Sigmoid colon (tissue), 7 donors: ENCODE measurements at regions of chr21 and their contacts with region 1.

Region 1: GRCh38 chr21:32412162-32413014 is at the start of gene EVA1C:
- DNase-seq: peak; percentile 88
- H3K4me3 ChIP-seq: peak within 1 kb of the TSS; percentile 70 to 83 (median 80)
- H3K27ac ChIP-seq: peak within 1 kb of the TSS; percentile 95 to 98 (median 96)
- H3K4me1 ChIP-seq: peaks cover 0 to 40% (median 26%) of the 10 kb centered on the region in 4 donors
- H3K27me3 ChIP-seq: no peaks in the 10 kb centered on the region
- CTCF ChIP-seq: no peak
- EP300 ChIP-seq: peak in 1 of 4 donors; percentile 75
- POLR2A ChIP-seq: no peak
- total RNA-seq, gene EVA1C: 32.1 to 53.8 (median 41.2) TPM

Region 2: DNA sequence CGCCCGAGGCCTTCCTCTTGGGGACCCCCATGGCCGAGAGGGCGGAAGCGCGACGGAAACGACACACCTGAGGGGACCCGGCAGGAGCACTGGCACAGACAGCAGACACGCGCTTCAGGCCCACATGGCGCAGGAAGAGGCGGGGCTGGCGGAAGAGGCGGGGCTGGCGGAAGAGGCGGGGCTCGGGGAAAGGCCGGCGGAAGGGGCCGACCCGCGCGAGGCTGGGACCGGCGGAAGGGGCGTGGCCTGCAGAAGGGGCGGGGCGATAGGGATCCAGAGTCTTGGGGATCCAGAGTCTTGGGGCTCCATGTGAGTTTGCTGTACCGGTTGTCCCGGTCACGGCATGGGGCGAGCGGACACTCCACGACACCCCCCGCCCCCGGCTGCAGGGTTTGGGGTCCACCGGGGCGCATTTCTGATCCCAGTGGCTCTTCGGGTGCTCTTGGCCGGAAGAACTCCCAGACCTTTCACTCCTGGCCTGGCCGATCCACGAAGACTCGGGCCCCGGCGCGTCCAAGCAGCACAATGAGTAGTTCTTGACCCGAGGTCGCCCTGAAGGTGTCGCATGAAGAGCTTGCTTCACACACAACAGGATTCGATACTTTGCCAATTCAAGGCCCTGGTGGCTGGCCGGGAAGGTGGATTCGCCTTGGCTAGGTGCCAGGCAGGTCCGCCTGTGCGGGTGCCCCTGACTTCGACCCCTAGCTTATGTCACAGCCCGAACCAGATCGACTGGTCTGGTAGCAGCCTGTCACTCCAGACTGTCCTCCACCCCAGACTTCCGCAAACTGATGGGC is 19.3 kb before region 1 on chr21 and contains the start of gene URB1:
- intact Hi-C with region 1: loop called (anchors 1 kb)
- DNase-seq: peak; percentile 94
- H3K4me3 ChIP-seq: peak within 1 kb of the TSS; percentile 76 to 96 (median 86)
- H3K27ac ChIP-seq: peak within 1 kb of the TSS; percentile 84 to 87 (median 86)
- H3K4me1 ChIP-seq: peaks cover 0 to 37% (median 17%) of the 10 kb centered on the region in 4 donors
- H3K27me3 ChIP-seq: no peaks in the 10 kb centered on the region
- CTCF ChIP-seq: no peak
- EP300 ChIP-seq: no peak
- POLR2A ChIP-seq: peak; percentile 60 to 73
- total RNA-seq, gene URB1: 7.5 to 16.7 (median 11.5) TPM

Region 3: DNA sequence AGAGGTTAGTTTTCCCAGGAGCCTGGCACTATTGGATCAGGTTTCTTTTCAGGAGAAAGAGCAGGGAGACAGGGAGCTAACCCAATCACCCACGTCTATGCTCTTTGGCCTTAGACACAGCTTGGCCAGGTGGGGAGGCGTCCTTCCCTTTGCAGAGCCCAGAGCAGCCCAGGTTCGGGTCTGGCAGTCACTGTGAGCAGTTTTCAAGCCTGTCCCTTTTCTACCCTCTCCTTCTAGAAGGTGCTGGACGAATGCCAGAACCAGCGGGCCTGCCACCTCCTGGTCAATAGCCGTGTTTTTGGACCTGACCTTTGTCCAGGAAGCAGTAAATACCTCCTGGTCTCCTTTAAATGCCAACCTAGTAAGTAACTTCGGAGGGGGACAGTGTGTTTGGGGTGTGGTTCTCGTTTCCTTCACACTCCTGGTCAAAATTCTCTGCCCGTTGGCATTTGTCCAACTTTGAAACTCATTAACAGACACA is 45.0 kb after region 1 on chr21:
- intact Hi-C with region 1: loop called (anchors 5 kb)
- DNase-seq: no peak
- H3K4me3 ChIP-seq: no peak overlapping the region
- H3K27ac ChIP-seq: peak overlapping the region; percentile 69 to 84 (median 74)
- H3K4me1 ChIP-seq: peaks cover 0 to 27% (median 25%) of the 10 kb centered on the region in 4 donors
- H3K27me3 ChIP-seq: no peaks in the 10 kb centered on the region
- CTCF ChIP-seq: no peak
- EP300 ChIP-seq: no peak
- POLR2A ChIP-seq: no peak

Region 4: GRCh38 chr21:32516756-32517649 is 104.6 kb after region 1 on chr21:
- intact Hi-C with region 1: loop called (anchors 10 kb)
- DNase-seq: peak; percentile 67
- H3K4me3 ChIP-seq: no peak overlapping the region
- H3K27ac ChIP-seq: peak overlapping the region in 1 of 4 donors; percentile 65
- H3K4me1 ChIP-seq: peaks cover 0 to 17% (median 3%) of the 10 kb centered on the region in 4 donors
- H3K27me3 ChIP-seq: no peaks in the 10 kb centered on the region
- CTCF ChIP-seq: no peak
- EP300 ChIP-seq: no peak
- POLR2A ChIP-seq: no peak

Region 5: GRCh38 chr21:32569261-32570230 is 157.2 kb after region 1 on chr21:
- intact Hi-C with region 1: loop called (anchors 2 kb)
- DNase-seq: peak; percentile 89
- H3K4me3 ChIP-seq: peak overlapping the region; percentile 35 to 62 (median 56)
- H3K27ac ChIP-seq: peak overlapping the region; percentile 78 to 88 (median 83)
- H3K4me1 ChIP-seq: peaks cover 0 to 13% (median 10%) of the 10 kb centered on the region in 4 donors
- H3K27me3 ChIP-seq: no peaks in the 10 kb centered on the region
- CTCF ChIP-seq: peak; percentile 60 to 85 (median 76)
- EP300 ChIP-seq: no peak
- POLR2A ChIP-seq: no peak

Region 6: DNA sequence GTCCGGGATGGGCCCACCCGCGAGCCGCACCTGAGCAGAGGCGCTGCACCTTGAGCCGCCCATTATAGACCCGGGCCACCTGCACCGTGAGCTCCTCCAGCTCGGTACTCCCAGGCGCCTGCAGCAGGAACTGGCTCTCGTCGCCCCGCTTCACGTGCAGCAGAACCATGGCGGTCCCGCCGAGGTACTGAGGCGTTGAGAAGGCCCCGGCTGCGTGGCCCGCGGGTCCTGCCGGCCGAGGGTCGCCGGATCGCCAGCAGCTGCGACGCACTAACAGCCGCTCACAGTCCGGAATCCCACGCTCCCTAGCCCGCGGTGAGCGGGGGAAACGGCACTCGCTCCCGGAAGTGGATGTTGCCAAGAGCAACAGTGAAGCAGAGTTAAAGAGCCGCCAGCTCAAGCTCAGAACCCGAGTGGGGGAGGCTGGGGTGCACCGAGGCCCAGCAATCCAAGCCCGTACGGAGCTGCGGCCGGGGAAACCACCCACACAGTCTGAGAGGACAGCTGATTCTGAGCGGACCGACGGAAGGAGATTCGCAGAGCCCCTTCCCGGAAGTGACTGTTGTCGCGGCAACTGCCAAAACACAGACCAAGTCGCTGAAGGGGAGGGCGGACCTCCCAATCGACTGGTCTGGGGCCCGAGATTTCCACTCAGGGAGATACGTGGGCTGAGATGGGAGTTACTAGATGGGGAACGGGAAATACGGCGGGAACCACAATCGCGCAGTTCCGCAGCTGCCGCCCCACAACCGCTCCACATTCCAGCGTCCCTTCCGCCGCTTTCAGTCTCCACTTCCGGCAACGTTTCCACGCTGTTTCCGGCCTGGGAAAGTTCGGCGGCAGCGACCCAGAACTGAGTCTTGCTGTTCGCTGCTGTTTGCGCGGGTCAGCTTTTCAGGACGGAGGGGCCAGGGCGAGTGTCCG is 199.9 kb after region 1 on chr21 and contains the start of gene CFAP298:
- intact Hi-C with region 1: loop called (anchors 1 kb)
- DNase-seq: peak; percentile 91
- H3K4me3 ChIP-seq: peak within 1 kb of the TSS; percentile 61 to 96 (median 80)
- H3K27ac ChIP-seq: peak within 1 kb of the TSS; percentile 79 to 88 (median 86)
- H3K4me1 ChIP-seq: peaks cover 0 to 18% (median 14%) of the 10 kb centered on the region in 4 donors
- H3K27me3 ChIP-seq: no peaks in the 10 kb centered on the region
- CTCF ChIP-seq: no peak
- EP300 ChIP-seq: no peak
- POLR2A ChIP-seq: no peak
- total RNA-seq, gene CFAP298: 14.4 to 33.8 (median 24.2) TPM

Region 7: GRCh38 chr21:32770871-32771523 is 358.6 kb after region 1 on chr21:
- intact Hi-C with region 1: loop called (anchors 5 kb)
- DNase-seq: peak; percentile 84
- H3K4me3 ChIP-seq: peak overlapping the region; percentile 74 to 94 (median 90)
- H3K27ac ChIP-seq: peak overlapping the region; percentile 92 to 97 (median 93)
- H3K4me1 ChIP-seq: peaks cover 0 to 53% (median 39%) of the 10 kb centered on the region in 4 donors
- H3K27me3 ChIP-seq: no peaks in the 10 kb centered on the region
- CTCF ChIP-seq: no peak
- EP300 ChIP-seq: no peak
- POLR2A ChIP-seq: no peak